PC-9 (cell line): ENCODE measurements at regions of chr10 and their contacts with region 1.

Region 1: DNA sequence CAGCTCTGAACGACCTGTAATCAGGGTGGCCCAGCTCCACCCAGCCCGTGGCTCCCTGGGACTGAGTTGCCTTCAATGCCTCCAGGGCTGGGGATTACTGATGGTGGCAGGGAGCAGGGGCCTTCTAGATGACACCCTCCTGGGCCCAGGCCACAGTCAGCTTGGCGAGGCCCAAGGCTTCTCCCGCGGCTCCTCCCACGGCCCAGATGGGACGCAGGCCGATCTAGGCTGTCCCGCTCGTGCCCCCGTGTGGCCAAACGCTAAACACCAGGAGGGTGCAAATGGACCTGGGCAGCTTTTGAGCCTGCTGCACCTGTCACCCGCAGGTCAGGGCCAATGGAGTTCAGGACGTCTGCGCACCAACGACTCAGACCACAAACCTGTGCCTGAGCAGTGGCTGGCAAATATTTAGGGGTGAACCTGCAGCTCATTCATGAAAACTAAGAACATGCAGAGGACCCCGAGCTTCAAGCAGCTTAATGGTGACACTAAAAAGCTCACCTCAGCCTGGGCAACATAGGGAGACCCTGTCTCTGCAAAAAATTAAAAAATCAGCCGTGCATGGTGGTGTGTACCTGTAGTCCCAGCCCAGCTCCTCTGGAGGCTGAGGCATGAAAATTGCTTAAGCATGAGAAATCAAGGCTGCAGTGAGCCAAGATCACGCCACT is 43.2 kb downstream of the ASB13 start:
- DNase-seq: peak; percentile 83 to 93
- H3K4me3 ChIP-seq: no peak overlapping the region
- H3K27ac ChIP-seq: peak overlapping the region; percentile 77
- H3K4me1 ChIP-seq: peaks cover 20% of the 10 kb centered on the region
- H3K27me3 ChIP-seq: no peaks in the 10 kb centered on the region
- CTCF ChIP-seq: peak; percentile 84

Region 2: GRCh38 chr10:5488309-5489167 is 134.7 kb before region 1 on chr10:
- CTCF ChIA-PET with region 1: interaction called, 7 read pairs
- POLR2A ChIA-PET with region 1: interaction called, 3 read pairs
- intact Hi-C with region 1: loop called (anchors 1 kb)
- DNase-seq: peak; percentile 94 to 97
- H3K4me3 ChIP-seq: peak overlapping the region; percentile 45; the same call in 1 of the 2 replicates
- H3K27ac ChIP-seq: peak overlapping the region; percentile 98
- H3K4me1 ChIP-seq: peaks cover 37% of the 10 kb centered on the region
- H3K27me3 ChIP-seq: no peaks in the 10 kb centered on the region
- CTCF ChIP-seq: 0 out of 2 replicates have a peak, but pooled peaks have one; percentile 16